Esophagus squamous epithelium (tissue), 5 donors: ENCODE measurements at regions of chr3 and their contacts with region 1.

Region 1: GRCh38 chr3:185659942-185660921 is 74.1 kb downstream of the SENP2 start:
- DNase-seq: no peak
- H3K4me3 ChIP-seq: peak overlapping the region in 1 of 4 donors; percentile 40
- H3K27ac ChIP-seq: peak overlapping the region; percentile 24 to 86 (median 70)
- H3K4me1 ChIP-seq: peaks cover 6 to 57% (median 42%) of the 10 kb centered on the region in 3 donors
- H3K27me3 ChIP-seq: peaks cover 0 to under 1% (median 0%) of the 10 kb centered on the region in 4 donors
- CTCF ChIP-seq: peak; percentile 65 to 97 (median 96)
- POLR2A ChIP-seq: no peak

Region 2: GRCh38 chr3:185605566-185605965 is 54.7 kb before region 1 on chr3:
- intact Hi-C with region 1: no loop called
- DNase-seq: no peak
- H3K4me3 ChIP-seq: no peak overlapping the region
- H3K27ac ChIP-seq: no peak overlapping the region
- H3K4me1 ChIP-seq: no peaks in the 10 kb centered on the region
- H3K27me3 ChIP-seq: no peaks in the 10 kb centered on the region
- CTCF ChIP-seq: no peak
- POLR2A ChIP-seq: no peak

Region 3: DNA sequence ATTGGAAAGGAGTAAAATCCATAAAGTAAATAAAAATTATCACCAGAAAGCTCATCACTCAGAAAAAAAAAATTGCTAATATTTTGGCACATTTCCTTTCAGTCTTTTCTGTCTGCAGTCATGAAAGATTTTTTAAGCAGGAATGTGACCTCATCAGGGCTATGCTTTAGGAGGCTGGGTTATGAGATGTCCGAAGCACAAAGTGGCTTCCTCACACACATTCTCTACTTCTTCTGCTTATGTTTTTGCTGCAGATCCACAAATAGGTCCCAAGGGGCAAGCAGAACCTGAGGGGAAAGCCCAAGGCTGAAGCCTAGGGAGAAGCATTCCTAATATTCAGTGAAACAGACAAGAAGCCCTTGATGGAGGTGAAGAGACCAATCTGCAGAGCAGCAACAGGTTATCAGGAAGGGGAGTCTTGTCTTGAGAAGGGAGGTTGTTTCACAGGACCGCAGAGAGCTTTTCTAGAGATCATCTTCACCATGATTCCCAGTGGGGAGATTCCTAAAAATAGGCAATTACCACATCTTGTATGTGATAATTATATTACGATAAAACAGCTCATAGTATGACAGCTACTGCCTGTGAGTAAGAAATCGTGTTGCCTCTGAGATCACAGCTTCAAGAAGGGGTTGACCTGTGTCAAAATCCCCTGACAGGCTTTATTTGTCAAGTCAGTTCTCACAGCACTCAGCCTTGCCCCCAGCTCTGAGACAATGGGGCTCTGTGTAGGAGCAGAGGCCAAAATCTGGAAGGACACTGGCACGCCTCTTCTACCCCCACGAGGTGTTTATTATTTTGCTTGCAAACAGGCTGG is 104.1 kb after region 1 on chr3:
- intact Hi-C with region 1: loop called (anchors 10 kb)
- DNase-seq: no peak
- H3K4me3 ChIP-seq: no peak overlapping the region
- H3K27ac ChIP-seq: peak overlapping the region in 3 of 4 donors; percentile 15 to 61 (median 29)
- H3K4me1 ChIP-seq: peaks cover 0 to 51% (median 3%) of the 10 kb centered on the region in 3 donors
- H3K27me3 ChIP-seq: peaks cover 0 to 8% (median 0%) of the 10 kb centered on the region in 4 donors
- CTCF ChIP-seq: no peak
- POLR2A ChIP-seq: no peak